Calu3 (cell line): ENCODE measurements at regions of chr18 and their contacts with region 1.

Region 1: GRCh38 chr18:31424383-31424988 is 23.1 kb upstream of the DSG3 start:
- DNase-seq: peak; percentile 67
- H3K4me3 Mint-ChIP-seq: no peak overlapping the region
- H3K27ac Mint-ChIP-seq: no peak overlapping the region
- H3K4me1 Mint-ChIP-seq: peaks cover 30% of the 10 kb centered on the region
- H3K27me3 Mint-ChIP-seq: no peaks in the 10 kb centered on the region
- CTCF ChIP-seq: peak; percentile 92

Region 2: DNA sequence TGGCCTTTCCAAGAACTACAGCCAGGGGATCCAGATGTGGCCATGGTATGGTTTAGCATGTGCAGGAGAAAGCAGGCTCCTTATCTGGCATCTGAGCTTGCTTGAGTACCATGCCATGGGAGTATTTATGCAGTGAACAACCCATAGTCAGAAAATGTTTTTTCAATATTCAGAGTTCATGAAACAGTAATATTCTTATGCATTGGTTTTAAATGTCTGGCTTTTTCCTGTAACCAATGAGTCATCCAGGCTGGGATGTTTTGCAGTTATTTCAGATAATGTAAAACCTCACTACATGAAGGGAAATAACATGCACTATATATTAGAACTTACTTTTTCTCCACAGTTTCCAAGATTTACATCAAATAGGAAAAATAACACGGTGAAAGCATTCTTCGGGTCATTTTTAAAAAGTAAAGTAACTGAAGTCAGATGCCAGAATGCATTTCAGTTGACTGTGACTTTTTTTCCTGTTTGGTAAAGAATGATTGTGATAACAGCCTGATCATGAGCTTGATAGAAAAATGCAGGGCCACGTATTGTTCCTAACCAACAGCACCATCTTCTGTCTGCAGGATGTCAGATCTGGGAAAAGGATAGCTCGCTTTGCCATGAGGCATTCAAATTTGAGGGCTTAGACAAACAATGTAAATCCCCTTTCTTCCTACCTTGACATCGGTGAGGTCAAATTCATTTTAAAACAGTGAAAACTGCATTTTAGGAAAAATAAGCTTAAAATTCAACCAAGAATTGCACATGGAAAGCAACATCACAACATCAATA is 534.8 kb before region 1 on chr18:
- CTCF ChIA-PET with region 1: no interaction called
- intact Hi-C with region 1: no loop called
- DNase-seq: peak; percentile 23
- H3K4me3 Mint-ChIP-seq: no peak overlapping the region
- H3K27ac Mint-ChIP-seq: no peak overlapping the region
- H3K4me1 Mint-ChIP-seq: no peaks in the 10 kb centered on the region
- H3K27me3 Mint-ChIP-seq: no peaks in the 10 kb centered on the region
- CTCF ChIP-seq: peak; percentile 37

Region 3: GRCh38 chr18:30999186-30999585 is 425.3 kb before region 1 on chr18:
- CTCF ChIA-PET with region 1: no interaction called
- intact Hi-C with region 1: loop called (anchors 10 kb)
- DNase-seq: no peak
- H3K4me3 Mint-ChIP-seq: no peak overlapping the region
- H3K27ac Mint-ChIP-seq: no peak overlapping the region
- H3K4me1 Mint-ChIP-seq: peaks cover 10% of the 10 kb centered on the region
- H3K27me3 Mint-ChIP-seq: no peaks in the 10 kb centered on the region
- CTCF ChIP-seq: no peak

Region 4: DNA sequence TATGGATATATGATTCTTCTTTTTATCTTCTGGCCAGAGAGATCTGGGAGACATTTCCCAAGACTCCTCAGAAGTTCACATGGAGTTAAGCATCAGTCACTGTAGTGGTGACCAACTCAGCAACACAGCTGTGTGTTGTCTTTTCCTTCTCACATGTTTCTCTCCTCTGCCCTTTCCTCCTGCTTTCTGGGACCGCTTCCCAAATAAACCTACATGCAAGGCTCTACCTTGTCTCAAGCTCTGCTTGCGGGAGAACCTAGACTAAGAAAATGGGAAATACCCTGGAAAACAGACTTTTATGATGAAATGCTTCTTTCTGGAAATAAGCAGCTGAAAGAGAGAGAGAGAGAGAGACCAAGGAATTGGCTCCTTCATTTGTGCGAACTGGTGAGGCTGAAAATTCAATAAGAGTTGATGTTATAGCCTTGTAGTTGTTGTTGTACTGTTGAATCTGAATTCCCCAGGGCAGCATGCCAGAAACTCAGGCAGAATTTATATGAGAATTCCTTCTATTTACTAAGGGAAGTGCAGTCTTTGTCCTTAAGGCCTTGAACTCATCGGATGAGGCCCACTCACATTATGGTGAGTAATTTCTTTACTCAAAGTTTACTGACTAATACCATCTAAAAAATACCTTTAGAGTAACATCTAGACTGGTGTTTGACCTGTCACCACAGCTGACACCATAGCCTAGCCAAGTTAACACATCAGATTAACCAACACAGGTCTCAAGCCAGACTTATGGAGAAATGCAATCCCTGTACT is 239.1 kb before region 1 on chr18:
- CTCF ChIA-PET with region 1: no interaction called
- intact Hi-C with region 1: no loop called
- DNase-seq: no peak
- H3K4me3 Mint-ChIP-seq: no peak overlapping the region
- H3K27ac Mint-ChIP-seq: no peak overlapping the region
- H3K4me1 Mint-ChIP-seq: peaks cover 2% of the 10 kb centered on the region
- H3K27me3 Mint-ChIP-seq: no peaks in the 10 kb centered on the region
- CTCF ChIP-seq: no peak

Region 5: GRCh38 chr18:31267823-31268481 is 156.5 kb before region 1 on chr18:
- CTCF ChIA-PET with region 1: no interaction called
- intact Hi-C with region 1: loop called (anchors 2 kb)
- DNase-seq: no peak
- H3K4me3 Mint-ChIP-seq: no peak overlapping the region
- H3K27ac Mint-ChIP-seq: peak overlapping the region; percentile 15
- H3K4me1 Mint-ChIP-seq: peaks cover 40% of the 10 kb centered on the region
- H3K27me3 Mint-ChIP-seq: no peaks in the 10 kb centered on the region
- CTCF ChIP-seq: no peak

Region 6: GRCh38 chr18:31497837-31498573 is 73.5 kb after region 1 on chr18 and contains the start of gene DSG2:
- CTCF ChIA-PET with region 1: interaction called, 15 read pairs
- intact Hi-C with region 1: no loop called
- DNase-seq: peak; percentile 87
- H3K4me3 Mint-ChIP-seq: peak within 1 kb of the TSS; percentile 80
- H3K27ac Mint-ChIP-seq: peak within 1 kb of the TSS; percentile 85
- H3K4me1 Mint-ChIP-seq: peaks cover 17% of the 10 kb centered on the region
- H3K27me3 Mint-ChIP-seq: no peaks in the 10 kb centered on the region
- CTCF ChIP-seq: no peak
- total RNA-seq, gene DSG2: 194 and 196 TPM in 2 replicates

Region 7: GRCh38 chr18:31506024-31506742 is 81.7 kb after region 1 on chr18:
- CTCF ChIA-PET with region 1: interaction called, 15 read pairs
- intact Hi-C with region 1: loop called (anchors 1 kb)
- DNase-seq: no peak
- H3K4me3 Mint-ChIP-seq: no peak overlapping the region
- H3K27ac Mint-ChIP-seq: no peak overlapping the region
- H3K4me1 Mint-ChIP-seq: peaks cover 37% of the 10 kb centered on the region
- H3K27me3 Mint-ChIP-seq: no peaks in the 10 kb centered on the region
- CTCF ChIP-seq: peak; percentile 20